Activated CD4-positive, alpha-beta T cell treated with anti-CD3 and anti-CD28 coated beads for 36 hours (primary cell): ENCODE measurements at regions of chr19 and their contacts with region 1.

Region 1: DNA sequence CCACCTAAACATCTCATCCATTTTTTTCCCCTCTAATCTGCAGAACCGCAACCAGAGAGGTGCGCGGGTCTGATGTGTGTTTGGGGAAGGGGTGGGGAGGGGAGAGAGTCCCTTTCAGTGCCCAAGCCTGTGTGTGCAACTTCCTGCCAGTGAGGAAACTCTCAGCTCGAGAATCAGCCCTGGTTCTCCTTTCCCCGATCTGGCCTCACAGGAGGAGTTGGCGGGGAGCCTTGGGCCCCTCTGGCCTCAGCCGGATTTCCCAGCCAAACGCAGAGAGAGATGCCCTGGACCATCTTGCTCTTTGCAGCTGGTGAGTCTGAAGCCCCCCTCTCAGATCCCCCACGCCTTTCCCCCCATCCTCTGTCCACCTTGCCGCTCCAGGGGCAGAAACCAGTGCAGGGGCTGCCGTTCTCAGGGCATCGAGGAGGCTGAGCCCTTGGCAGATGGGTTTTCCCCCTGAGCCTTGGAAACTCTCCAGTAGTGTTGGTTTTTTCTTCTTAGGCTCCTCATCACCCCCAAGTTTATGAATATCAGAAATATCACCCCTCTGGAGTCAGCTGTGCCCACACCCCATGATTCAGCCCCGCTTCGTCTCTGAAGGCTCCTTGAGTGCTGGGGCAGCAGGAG is at the start of gene C19orf38:
- DNase-seq: peak; percentile 35
- ATAC-seq: peak; percentile 73
- H3K4me3 Mint-ChIP-seq: peak within 1 kb of the TSS; percentile 61
- H3K27ac Mint-ChIP-seq: peak within 1 kb of the TSS; percentile 72
- H3K4me1 Mint-ChIP-seq: peaks cover 6% of the 10 kb centered on the region
- H3K27me3 Mint-ChIP-seq: no peaks in the 10 kb centered on the region
- total RNA-seq, gene C19orf38: 2.7 to 3.6 TPM

Region 2: DNA sequence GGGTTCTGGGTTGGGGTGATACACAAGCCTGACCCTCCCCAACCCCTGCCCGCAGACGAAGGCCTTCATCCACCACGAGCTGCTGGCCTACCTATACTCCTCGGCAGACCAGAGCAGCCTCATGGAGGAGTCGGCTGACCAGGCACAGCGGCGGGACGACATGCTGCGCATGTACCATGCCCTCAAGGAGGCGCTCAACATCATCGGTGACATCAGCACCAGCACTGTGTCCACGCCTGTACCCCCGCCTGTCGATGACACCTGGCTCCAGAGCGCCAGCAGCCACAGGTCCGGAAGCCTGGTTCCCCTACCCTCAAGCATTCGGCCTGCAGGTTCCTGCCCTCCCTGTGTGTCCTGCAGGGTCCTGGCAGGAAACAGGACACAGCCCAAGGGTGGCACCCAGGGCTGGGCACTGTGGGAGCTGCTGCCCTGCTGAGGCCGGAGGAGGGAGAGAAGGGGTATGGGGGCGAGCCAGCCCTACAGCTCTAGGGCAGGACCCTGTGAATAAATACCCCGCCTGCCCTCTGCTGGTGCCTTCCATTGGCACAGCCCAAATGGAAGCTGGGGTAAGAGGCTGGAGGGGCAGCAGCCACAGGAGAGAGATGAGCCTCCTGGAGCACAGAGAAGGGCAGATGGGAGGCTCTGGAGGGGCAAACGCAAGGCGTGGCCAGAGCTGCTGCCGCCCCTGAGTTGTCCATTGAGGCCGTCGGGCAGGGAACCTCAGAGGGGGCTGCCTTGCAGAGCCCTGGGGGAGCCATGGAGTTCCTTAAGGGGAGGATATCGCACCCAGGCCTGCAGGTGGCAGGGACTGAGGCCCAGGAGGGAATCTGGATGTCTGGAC is 19.1 kb before region 1 on chr19:
- CTCF ChIA-PET with region 1: no interaction called
- POLR2A ChIA-PET with region 1: interaction called, 13 read pairs
- intact Hi-C with region 1: no loop called
- DNase-seq: peak; percentile 37
- ATAC-seq: peak; percentile 49
- H3K4me3 Mint-ChIP-seq: no peak overlapping the region
- H3K27ac Mint-ChIP-seq: no peak overlapping the region
- H3K4me1 Mint-ChIP-seq: no peaks in the 10 kb centered on the region
- H3K27me3 Mint-ChIP-seq: no peaks in the 10 kb centered on the region

Region 3: DNA sequence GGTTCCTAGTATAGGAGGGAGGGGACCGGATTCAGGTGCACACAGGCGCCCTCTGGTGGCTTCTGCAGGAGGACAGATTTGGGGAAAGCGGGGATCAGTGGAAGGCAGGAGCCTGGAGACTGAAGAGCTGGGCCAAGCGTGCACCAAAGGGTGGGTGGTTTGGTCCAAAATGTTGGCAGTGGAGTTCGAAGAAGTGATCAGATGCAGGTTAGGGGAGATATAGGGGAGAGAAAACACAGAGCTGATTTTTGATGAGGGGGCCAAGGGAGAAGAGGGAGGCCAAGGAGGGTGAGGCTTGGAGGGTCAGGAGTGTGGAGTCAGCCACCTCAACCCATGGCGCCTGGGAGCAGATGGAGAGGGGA is 16.2 kb after region 1 on chr19:
- CTCF ChIA-PET with region 1: interaction called, 70 read pairs
- POLR2A ChIA-PET with region 1: no interaction called
- intact Hi-C with region 1: no loop called
- DNase-seq: peak; percentile 93
- ATAC-seq: peak; percentile 94
- H3K4me3 Mint-ChIP-seq: no peak overlapping the region
- H3K27ac Mint-ChIP-seq: peak overlapping the region; percentile 16
- H3K4me1 Mint-ChIP-seq: peaks cover 14% of the 10 kb centered on the region
- H3K27me3 Mint-ChIP-seq: no peaks in the 10 kb centered on the region

Region 4: DNA sequence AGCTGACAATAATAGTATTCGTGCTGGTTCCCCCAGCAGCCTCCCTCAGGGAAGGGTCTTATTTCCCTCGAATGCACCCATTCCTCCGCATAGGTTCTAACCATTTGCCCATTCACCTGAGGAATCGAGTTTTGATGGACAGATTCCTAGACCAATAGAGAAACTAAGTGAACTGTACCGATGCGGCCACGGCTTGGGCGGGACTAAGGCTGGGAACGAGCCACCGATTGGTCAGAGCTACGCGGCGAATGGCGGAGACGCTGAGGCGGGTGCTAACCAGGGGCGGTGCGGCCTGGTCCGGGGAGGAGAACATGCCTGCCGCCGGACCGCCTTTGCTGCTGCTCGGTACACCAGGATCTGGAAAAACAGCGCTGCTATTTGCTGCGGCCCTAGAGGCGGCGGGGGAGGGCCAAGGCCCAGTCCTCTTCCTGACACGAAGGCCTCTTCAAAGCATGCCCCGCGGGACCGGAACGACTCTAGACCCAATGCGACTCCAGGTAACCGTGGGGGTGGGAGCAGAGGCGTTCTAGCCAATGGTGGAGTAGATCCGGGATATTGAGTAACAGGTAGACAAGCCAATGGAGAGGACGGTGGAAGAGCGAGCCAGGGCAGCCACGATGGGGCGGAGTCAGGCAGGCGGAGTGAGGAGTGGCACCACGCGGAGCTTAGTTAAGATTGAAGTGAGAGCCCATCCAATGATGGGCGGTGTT is 526.2 kb after region 1 on chr19 and contains the start of gene SWSAP1:
- CTCF ChIA-PET with region 1: no interaction called
- POLR2A ChIA-PET with region 1: no interaction called
- intact Hi-C with region 1: no loop called
- DNase-seq: peak; percentile 98
- ATAC-seq: peak; percentile 92
- H3K4me3 Mint-ChIP-seq: no peak within 1 kb of the TSS
- H3K27ac Mint-ChIP-seq: no peak within 1 kb of the TSS
- H3K4me1 Mint-ChIP-seq: peaks cover 28% of the 10 kb centered on the region
- H3K27me3 Mint-ChIP-seq: no peaks in the 10 kb centered on the region
- total RNA-seq, gene SWSAP1: 1.5 to 1.7 TPM